CD4-positive, alpha-beta T cell (primary cell): ENCODE measurements at regions of chr9 and their contacts with region 1.

Region 1: DNA sequence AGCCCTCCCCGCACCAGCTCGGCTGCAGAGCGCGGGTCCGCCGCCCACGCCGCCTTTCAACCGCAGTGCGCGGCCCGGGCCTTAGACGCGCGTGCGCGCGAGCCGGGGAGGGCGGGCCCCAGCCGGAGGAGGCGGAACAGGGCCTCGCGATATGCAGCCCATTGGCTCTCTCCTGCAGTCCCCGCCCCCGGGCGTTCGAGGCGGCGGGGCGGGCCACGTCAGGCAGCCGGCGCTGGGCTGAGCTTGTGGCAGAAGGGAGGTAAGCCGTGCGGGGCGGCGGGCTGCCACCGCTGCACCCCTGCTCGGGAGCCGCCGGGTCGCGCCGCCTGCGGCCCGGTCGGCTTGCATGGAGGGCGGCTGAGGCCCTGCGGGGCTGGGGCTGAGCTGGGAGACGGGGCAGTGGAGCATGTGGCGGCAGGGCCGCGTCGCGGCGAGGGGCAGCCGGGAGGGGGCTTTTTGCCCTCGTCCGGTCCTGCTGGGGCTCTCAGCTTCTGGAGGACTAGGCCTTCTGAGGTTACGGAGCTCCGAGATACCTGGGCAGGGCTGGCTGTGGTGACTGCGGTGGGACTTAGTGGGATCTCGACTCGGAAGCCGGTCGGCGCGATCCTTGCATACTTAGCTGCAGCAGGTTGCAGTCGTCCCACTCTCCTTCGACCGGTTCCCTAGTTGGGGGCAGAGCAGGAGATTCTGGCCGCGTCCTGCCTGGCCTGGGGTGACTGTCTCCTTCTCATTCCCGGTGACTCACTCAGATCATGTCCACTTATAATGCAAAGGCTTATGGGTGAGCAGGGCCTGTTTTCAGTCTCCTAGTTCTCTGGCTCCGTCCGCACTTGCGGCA is at the start of gene FOCAD:
- DNase-seq: peak; percentile 88 to 98 (median 94)
- ATAC-seq: peak; percentile 97
- H3K4me3 ChIP-seq: peak within 1 kb of the TSS; percentile 93
- H3K4me3 Mint-ChIP-seq: peak within 1 kb of the TSS; percentile 90
- H3K27ac ChIP-seq: peak within 1 kb of the TSS; percentile 50 to 71
- H3K27ac Mint-ChIP-seq: peak within 1 kb of the TSS; percentile 75
- H3K4me1 ChIP-seq: peaks cover 18% of the 10 kb centered on the region
- H3K4me1 Mint-ChIP-seq: peaks cover 19% of the 10 kb centered on the region
- H3K27me3 ChIP-seq: no peaks in the 10 kb centered on the region
- H3K27me3 Mint-ChIP-seq: no peaks in the 10 kb centered on the region
- CTCF ChIP-seq: no peak
- total RNA-seq, gene FOCAD: 12.4 to 14.1 TPM

Region 2: DNA sequence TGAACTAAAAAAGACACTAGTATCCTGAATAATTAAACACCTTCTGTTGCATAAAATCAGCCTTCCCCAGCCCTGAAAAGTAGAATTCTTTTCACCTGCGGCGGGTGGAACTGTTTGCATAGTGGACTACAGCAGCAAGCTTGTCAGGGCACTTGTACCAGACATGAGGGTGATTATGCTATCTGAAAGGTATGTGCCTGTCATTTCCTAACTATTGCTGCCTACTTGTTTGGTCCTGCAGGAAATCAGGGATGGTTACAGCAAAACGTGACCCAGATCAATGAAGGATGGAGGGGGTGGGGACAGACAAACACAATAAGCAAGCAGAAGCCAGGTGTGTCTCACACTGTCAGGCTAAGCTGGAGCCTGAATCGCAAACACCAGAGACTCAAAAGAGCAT is 447.6 kb before region 1 on chr9:
- CTCF ChIA-PET with region 1: no interaction called
- POLR2A ChIA-PET with region 1: no interaction called
- intact Hi-C with region 1: no loop called
- DNase-seq: no peak
- ATAC-seq: no peak
- H3K4me3 ChIP-seq: no peak overlapping the region
- H3K4me3 Mint-ChIP-seq: no peak overlapping the region
- H3K27ac ChIP-seq: no peak overlapping the region
- H3K27ac Mint-ChIP-seq: no peak overlapping the region
- H3K4me1 ChIP-seq: peaks cover 7% of the 10 kb centered on the region
- H3K4me1 Mint-ChIP-seq: peaks cover 22% of the 10 kb centered on the region
- H3K27me3 ChIP-seq: no peaks in the 10 kb centered on the region
- H3K27me3 Mint-ChIP-seq: no peaks in the 10 kb centered on the region
- CTCF ChIP-seq: no peak

Region 3: GRCh38 chr9:20558566-20559016 is 125.7 kb before region 1 on chr9:
- CTCF ChIA-PET with region 1: interaction called, 3 read pairs
- POLR2A ChIA-PET with region 1: no interaction called
- intact Hi-C with region 1: loop called in 1 of 2 experiments (anchors 10 kb)
- DNase-seq: peak in 1 of 14 experiments; percentile 28
- ATAC-seq: peak; percentile 24
- H3K4me3 ChIP-seq: no peak overlapping the region
- H3K4me3 Mint-ChIP-seq: no peak overlapping the region
- H3K27ac ChIP-seq: no peak overlapping the region
- H3K27ac Mint-ChIP-seq: peak overlapping the region; percentile 16
- H3K4me1 ChIP-seq: peaks cover 20% of the 10 kb centered on the region
- H3K4me1 Mint-ChIP-seq: peaks cover 91% of the 10 kb centered on the region
- H3K27me3 ChIP-seq: no peaks in the 10 kb centered on the region
- H3K27me3 Mint-ChIP-seq: no peaks in the 10 kb centered on the region
- CTCF ChIP-seq: no peak

Region 4: DNA sequence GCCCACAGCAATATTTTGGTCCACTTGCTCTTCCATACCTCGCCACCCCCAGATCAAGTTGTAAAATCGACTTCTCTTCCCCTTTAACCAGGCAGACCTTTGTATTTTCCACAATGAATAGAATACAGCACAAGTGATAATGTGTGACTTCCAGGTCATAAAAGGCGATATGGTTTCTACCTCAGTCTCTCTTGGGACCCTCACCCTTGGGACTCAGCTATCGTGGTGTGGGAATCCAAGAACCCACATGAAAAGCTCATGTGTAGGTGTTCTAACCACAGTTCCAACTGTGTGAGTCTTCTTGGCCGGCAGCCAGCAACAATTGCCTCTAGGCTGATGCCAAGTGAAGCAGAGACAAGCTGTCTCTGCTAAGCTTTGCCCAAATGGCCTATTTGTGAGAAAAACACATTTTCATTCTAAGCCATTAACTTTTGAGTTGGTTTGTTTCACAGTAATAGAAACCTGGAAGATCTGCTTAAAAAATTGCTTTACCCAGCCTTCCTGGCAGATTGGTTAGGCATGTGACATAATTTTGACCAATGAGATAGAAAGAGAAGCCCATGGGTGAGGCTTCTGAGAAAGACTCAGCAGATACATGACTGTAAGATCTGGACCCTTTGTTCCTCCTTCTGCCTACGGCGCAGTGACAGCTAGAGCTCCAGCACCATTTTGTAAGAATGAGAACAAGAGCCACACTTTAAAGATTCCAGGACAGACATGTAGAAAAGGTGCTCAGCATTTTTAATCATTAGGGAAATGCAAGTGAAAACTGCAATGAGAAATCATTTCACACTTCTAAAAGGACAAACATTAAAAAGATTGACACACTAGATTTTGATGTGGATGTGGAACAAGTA is 43.7 kb before region 1 on chr9:
- CTCF ChIA-PET with region 1: interaction called, 3 read pairs
- POLR2A ChIA-PET with region 1: interaction called, 16 read pairs
- intact Hi-C with region 1: loop called (anchors 5 kb)
- DNase-seq: peak; percentile 63 to 92 (median 80)
- ATAC-seq: peak; percentile 86
- H3K4me3 ChIP-seq: peak overlapping the region; percentile 3
- H3K4me3 Mint-ChIP-seq: peak overlapping the region; percentile 26
- H3K27ac ChIP-seq: no peak overlapping the region
- H3K27ac Mint-ChIP-seq: peak overlapping the region; percentile 13
- H3K4me1 ChIP-seq: peaks cover 11% of the 10 kb centered on the region
- H3K4me1 Mint-ChIP-seq: peaks cover 15% of the 10 kb centered on the region
- H3K27me3 ChIP-seq: no peaks in the 10 kb centered on the region
- H3K27me3 Mint-ChIP-seq: no peaks in the 10 kb centered on the region
- CTCF ChIP-seq: no peak